Activated CD4-positive, alpha-beta T cell treated with anti-CD3 and anti-CD28 coated beads for 36 hours (primary cell): ENCODE measurements at regions of chr14 and their contacts with region 1.

Region 1: GRCh38 chr14:49633640-49634546 is 1.2 kb downstream of the DNAAF2 start:
- DNase-seq: peak; percentile 98
- ATAC-seq: peak; percentile 88
- H3K4me3 Mint-ChIP-seq: peak overlapping the region; percentile 98
- H3K27ac Mint-ChIP-seq: peak overlapping the region; percentile 95
- H3K4me1 Mint-ChIP-seq: peaks cover 46% of the 10 kb centered on the region
- H3K27me3 Mint-ChIP-seq: no peaks in the 10 kb centered on the region

Region 2: GRCh38 chr14:49396801-49397200 is 237.1 kb before region 1 on chr14:
- CTCF ChIA-PET with region 1: no interaction called
- POLR2A ChIA-PET with region 1: no interaction called
- intact Hi-C with region 1: no loop called
- DNase-seq: no peak
- ATAC-seq: no peak
- H3K4me3 Mint-ChIP-seq: no peak overlapping the region
- H3K27ac Mint-ChIP-seq: no peak overlapping the region
- H3K4me1 Mint-ChIP-seq: no peaks in the 10 kb centered on the region
- H3K27me3 Mint-ChIP-seq: peaks cover 4% of the 10 kb centered on the region

Region 3: GRCh38 chr14:49598485-49599300 is 35.2 kb before region 1 on chr14 and contains the start of gene LRR1:
- CTCF ChIA-PET with region 1: interaction called, 12 read pairs
- POLR2A ChIA-PET with region 1: interaction called, 8 read pairs
- intact Hi-C with region 1: loop called in 1 of 2 experiments (anchors 1 kb)
- DNase-seq: peak; percentile 90
- ATAC-seq: peak; percentile 76
- H3K4me3 Mint-ChIP-seq: peak within 1 kb of the TSS; percentile 99
- H3K27ac Mint-ChIP-seq: peak within 1 kb of the TSS; percentile 99
- H3K4me1 Mint-ChIP-seq: peaks cover 19% of the 10 kb centered on the region
- H3K27me3 Mint-ChIP-seq: no peaks in the 10 kb centered on the region
- total RNA-seq, gene LRR1: 37.3 to 47.9 TPM

Region 4: DNA sequence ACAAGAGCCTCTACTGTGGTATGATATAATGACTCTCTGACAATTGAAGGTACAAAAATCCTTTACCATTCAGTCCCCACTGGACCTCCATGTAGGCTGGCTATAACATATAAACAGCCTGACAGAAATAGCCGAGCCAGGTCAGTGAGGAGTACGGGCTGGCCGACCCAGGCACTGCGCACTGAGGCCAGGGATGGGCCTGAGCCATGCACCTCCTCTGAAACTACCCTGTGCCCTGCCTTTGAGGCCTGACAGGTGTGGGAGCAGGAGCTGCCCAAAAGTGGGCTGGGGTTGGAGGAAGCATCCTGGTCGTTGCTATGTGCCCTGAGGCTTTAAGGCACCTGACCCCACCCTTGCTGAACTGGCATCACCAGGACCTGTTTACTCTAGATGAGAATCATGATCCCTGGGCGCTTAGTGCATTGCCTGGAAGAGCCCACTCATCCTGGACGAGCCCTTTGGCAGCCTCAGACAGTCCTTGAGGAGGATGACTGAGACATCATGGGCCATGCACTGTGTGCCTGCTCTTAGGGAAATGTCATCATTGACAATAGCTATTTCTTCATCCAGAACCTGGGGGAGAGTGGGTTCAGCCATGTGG is 42.7 kb after region 1 on chr14:
- CTCF ChIA-PET with region 1: no interaction called
- POLR2A ChIA-PET with region 1: no interaction called
- intact Hi-C with region 1: no loop called
- DNase-seq: no peak
- ATAC-seq: no peak
- H3K4me3 Mint-ChIP-seq: no peak overlapping the region
- H3K27ac Mint-ChIP-seq: no peak overlapping the region
- H3K4me1 Mint-ChIP-seq: peaks cover 7% of the 10 kb centered on the region
- H3K27me3 Mint-ChIP-seq: no peaks in the 10 kb centered on the region

Region 5: GRCh38 chr14:49692811-49693734 is 59.2 kb after region 1 on chr14 and contains the start of gene KLHDC1:
- CTCF ChIA-PET with region 1: interaction called, 3 read pairs
- POLR2A ChIA-PET with region 1: interaction called, 4 read pairs
- intact Hi-C with region 1: loop called (anchors 1 to 2 kb)
- DNase-seq: peak; percentile 86
- ATAC-seq: peak; percentile 63
- H3K4me3 Mint-ChIP-seq: peak within 1 kb of the TSS; percentile 72
- H3K27ac Mint-ChIP-seq: peak within 1 kb of the TSS; percentile 92
- H3K4me1 Mint-ChIP-seq: peaks cover 42% of the 10 kb centered on the region
- H3K27me3 Mint-ChIP-seq: no peaks in the 10 kb centered on the region
- total RNA-seq, gene KLHDC1: 0.81 to 1.3 TPM

Region 6: DNA sequence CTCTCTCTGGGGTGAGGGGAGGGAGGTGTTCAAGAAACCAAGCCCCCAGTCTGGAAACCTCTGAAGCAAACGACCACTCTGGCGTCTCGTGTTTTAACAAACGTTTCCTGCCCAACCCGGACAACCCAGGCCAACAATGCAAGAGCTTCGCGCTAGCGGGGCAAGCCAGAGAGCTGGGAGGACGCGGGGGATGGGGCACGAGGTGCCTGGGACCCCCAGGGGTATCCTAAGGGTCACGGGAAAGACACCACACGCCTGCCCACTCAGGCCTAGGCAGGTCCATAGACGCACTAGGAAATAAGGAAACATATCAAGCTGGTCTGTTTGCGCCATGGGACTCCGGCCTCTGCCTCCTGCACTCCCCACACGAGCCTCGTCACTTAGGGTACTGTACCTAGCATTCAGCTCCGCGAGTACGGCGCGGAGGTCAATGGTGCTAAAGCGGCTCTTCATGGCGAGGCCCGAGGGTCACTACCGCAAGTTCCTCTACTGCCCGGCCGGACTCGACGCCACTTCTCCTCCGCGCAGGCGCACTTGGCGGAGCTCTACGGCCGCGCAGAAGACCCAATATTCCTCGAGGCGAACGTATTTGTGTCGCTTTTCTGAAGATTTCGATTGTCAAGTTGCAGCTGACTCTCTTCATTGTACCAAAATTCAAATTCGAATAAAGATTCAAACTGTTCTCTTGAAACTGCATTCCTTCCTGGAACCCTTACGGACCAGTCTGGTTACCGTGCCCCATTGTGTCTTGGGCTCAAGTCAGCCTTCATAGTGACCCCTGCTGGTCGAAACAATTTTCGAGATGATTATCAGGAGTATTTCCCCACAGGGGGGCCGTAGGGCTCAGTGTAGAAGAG is 218.6 kb after region 1 on chr14 and contains the start of gene NEMF:
- CTCF ChIA-PET with region 1: interaction called, 12 read pairs
- POLR2A ChIA-PET with region 1: interaction called, 9 read pairs
- intact Hi-C with region 1: loop called (anchors 1 to 2 kb)
- DNase-seq: peak; percentile 86
- ATAC-seq: peak; percentile 79
- H3K4me3 Mint-ChIP-seq: peak within 1 kb of the TSS; percentile 97
- H3K27ac Mint-ChIP-seq: peak within 1 kb of the TSS; percentile 98
- H3K4me1 Mint-ChIP-seq: peaks cover 39% of the 10 kb centered on the region
- H3K27me3 Mint-ChIP-seq: no peaks in the 10 kb centered on the region
- total RNA-seq, gene NEMF: 62.4 to 97.9 TPM

Region 7: GRCh38 chr14:50109342-50109741 is 475.4 kb after region 1 on chr14:
- CTCF ChIA-PET with region 1: no interaction called
- POLR2A ChIA-PET with region 1: no interaction called
- intact Hi-C with region 1: loop called in 1 of 2 experiments (anchors 1 kb)
- DNase-seq: no peak
- ATAC-seq: no peak
- H3K4me3 Mint-ChIP-seq: no peak overlapping the region
- H3K27ac Mint-ChIP-seq: no peak overlapping the region
- H3K4me1 Mint-ChIP-seq: peaks cover 32% of the 10 kb centered on the region
- H3K27me3 Mint-ChIP-seq: no peaks in the 10 kb centered on the region

Region 8: GRCh38 chr14:50520947-50521815 is 887.3 kb after region 1 on chr14:
- CTCF ChIA-PET with region 1: no interaction called
- POLR2A ChIA-PET with region 1: no interaction called
- intact Hi-C with region 1: loop called in 1 of 2 experiments (anchors 1 kb)
- DNase-seq: peak; percentile 84
- ATAC-seq: peak; percentile 81
- H3K4me3 Mint-ChIP-seq: peak overlapping the region; percentile 55
- H3K27ac Mint-ChIP-seq: peak overlapping the region; percentile 94
- H3K4me1 Mint-ChIP-seq: peaks cover 56% of the 10 kb centered on the region
- H3K27me3 Mint-ChIP-seq: no peaks in the 10 kb centered on the region